Common myeloid progenitor, CD34-positive (primary cell): ENCODE measurements at regions of chr15 and their contacts with region 1.

Region 1: GRCh38 chr15:40782580-40783227 is 12.9 kb downstream of the C15orf62 start:
- DNase-seq: peak; percentile 65 to 81 (median 79)
- H3K4me3 ChIP-seq: no peak overlapping the region
- H3K27ac ChIP-seq: no peak overlapping the region
- H3K4me1 ChIP-seq: peaks cover 7 to 18% (median 11%) of the 10 kb centered on the region in 4 experiments
- H3K27me3 ChIP-seq: no peaks in the 10 kb centered on the region

Region 2: GRCh38 chr15:40702077-40702476 is 80.6 kb before region 1 on chr15:
- CTCF ChIA-PET with region 1: interaction called, 19 read pairs
- POLR2A ChIA-PET with region 1: interaction called, 3 read pairs
- DNase-seq: peak; percentile 41 to 71 (median 61)
- H3K4me3 ChIP-seq: no peak overlapping the region
- H3K27ac ChIP-seq: no peak overlapping the region
- H3K4me1 ChIP-seq: peaks cover 0 to 4% (median 0%) of the 10 kb centered on the region in 4 experiments
- H3K27me3 ChIP-seq: no peaks in the 10 kb centered on the region

Region 3: GRCh38 chr15:40754883-40755811 is 27.6 kb before region 1 on chr15 and contains the start of gene RMDN3:
- CTCF ChIA-PET with region 1: interaction called, 204 read pairs
- POLR2A ChIA-PET with region 1: no interaction called
- DNase-seq: peak; percentile 91 to 94 (median 93)
- H3K4me3 ChIP-seq: peak within 1 kb of the TSS; percentile 82 to 99 (median 95)
- H3K27ac ChIP-seq: peak within 1 kb of the TSS; percentile 77 to 92
- H3K4me1 ChIP-seq: peaks cover 0 to 39% (median 28%) of the 10 kb centered on the region in 4 experiments
- H3K27me3 ChIP-seq: no peaks in the 10 kb centered on the region

Region 4: GRCh38 chr15:40763801-40764732 is 18.6 kb before region 1 on chr15 and contains the start of gene GCHFR:
- CTCF ChIA-PET with region 1: interaction called, 123 read pairs
- POLR2A ChIA-PET with region 1: interaction called, 3 read pairs
- DNase-seq: peak in 2 of 3 donors; percentile 64 to 77
- H3K4me3 ChIP-seq: peak within 1 kb of the TSS; percentile 47 to 81 (median 64)
- H3K27ac ChIP-seq: peak within 1 kb of the TSS in 1 of 2 experiments; percentile 57
- H3K4me1 ChIP-seq: peaks cover 5 to 66% (median 49%) of the 10 kb centered on the region in 4 experiments
- H3K27me3 ChIP-seq: no peaks in the 10 kb centered on the region

Region 5: GRCh38 chr15:40769274-40770146 is 13.2 kb before region 1 on chr15 and contains the start of gene C15orf62:
- CTCF ChIA-PET with region 1: interaction called, 123 read pairs
- POLR2A ChIA-PET with region 1: interaction called, 3 read pairs
- DNase-seq: peak; percentile 86 to 97 (median 94)
- H3K4me3 ChIP-seq: peak within 1 kb of the TSS in 5 of 7 experiments; percentile 21 to 63 (median 53)
- H3K27ac ChIP-seq: peak within 1 kb of the TSS; percentile 40 to 65
- H3K4me1 ChIP-seq: peaks cover 4 to 64% (median 52%) of the 10 kb centered on the region in 4 experiments
- H3K27me3 ChIP-seq: no peaks in the 10 kb centered on the region

Region 6: DNA sequence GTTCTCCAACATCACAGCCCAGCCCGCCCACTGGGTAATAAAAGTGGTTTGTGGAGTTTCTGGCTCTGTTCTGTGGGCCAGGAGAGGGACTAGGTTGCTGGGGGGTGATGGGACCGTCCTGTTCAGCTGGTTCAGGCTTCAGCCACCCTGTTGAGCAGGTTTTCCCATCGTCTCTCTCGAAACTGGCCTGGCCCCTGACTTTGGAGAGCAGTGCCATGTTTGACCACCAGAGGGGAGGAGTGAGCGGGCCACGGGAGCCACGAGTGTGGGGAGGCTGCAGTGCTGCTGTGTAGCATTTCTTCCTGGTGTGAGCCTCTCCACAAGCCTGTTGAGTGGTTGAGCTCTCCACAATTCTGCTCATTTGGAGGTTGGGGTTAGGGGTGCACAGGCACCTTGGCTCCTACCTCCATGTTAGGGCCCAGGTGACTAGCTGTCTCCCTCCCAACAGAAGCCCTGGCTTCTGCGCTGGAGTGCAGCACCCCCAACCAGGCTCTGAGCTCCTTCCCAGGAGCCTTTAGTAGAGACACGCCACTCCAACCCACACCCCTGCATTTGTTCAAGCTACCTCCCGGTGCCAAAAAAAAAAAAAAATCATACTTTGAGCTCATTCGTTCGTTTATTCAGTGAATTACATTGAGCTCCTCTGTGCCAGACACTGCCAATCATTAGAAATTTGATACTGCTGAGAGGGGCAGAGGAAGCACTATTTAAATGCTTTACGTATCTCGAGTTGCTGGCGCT is 75.1 kb after region 1 on chr15:
- CTCF ChIA-PET with region 1: interaction called, 28 read pairs
- POLR2A ChIA-PET with region 1: no interaction called
- DNase-seq: peak; percentile 59 to 80 (median 73)
- H3K4me3 ChIP-seq: no peak overlapping the region
- H3K27ac ChIP-seq: no peak overlapping the region
- H3K4me1 ChIP-seq: peaks cover 0 to 10% (median 4%) of the 10 kb centered on the region in 4 experiments
- H3K27me3 ChIP-seq: no peaks in the 10 kb centered on the region